Activated CD4-positive, alpha-beta memory T cell treated with anti-CD3 and anti-CD28 coated beads for 36 hours (primary cell): ENCODE measurements at regions of chr2 and their contacts with region 1.

Region 1: GRCh38 chr2:9813312-9814133 is 29.8 kb upstream of the TAF1B start:
- DNase-seq: peak; percentile 80
- H3K4me3 Mint-ChIP-seq: no peak overlapping the region
- H3K27ac Mint-ChIP-seq: no peak overlapping the region
- H3K4me1 Mint-ChIP-seq: peaks cover 14% of the 10 kb centered on the region
- H3K27me3 Mint-ChIP-seq: peaks cover 5% of the 10 kb centered on the region

Region 2: DNA sequence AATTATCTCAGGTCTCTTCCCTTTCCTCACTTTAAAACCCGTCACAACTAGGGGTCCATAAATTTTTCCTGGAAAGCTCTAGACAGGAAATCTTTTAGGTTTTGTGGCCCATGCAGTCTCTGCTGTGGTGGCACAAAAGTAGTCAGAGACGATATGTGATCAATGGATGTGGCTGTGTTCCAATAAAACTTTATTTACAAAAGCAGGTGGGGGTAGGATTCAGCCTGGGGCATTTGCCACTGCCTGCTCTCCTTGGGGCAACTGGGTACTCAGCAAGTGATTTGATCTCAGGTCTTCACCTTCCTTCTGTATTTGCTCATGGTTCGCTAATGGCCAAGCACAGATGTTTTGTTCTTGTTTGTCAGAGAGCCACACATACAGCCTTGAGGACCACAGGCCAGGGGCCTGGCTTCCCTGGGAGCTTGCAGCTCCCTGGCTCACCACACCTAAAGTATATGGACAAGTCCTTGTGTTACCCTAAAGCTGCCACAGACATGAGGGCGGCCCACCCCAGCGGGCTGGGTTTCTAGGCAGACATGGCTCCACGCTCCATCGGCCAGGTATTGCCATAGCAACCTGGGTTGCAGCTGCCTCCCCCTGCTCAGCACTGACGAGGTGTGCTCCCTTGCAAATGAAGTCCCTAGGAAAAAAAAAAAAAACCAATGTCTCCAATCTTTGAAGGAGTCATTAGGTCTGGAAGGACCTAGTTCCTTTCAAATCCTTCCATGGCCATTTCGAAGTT is 93.0 kb before region 1 on chr2:
- CTCF ChIA-PET with region 1: no interaction called
- POLR2A ChIA-PET with region 1: no interaction called
- intact Hi-C with region 1: no loop called
- DNase-seq: no peak
- H3K4me3 Mint-ChIP-seq: no peak overlapping the region
- H3K27ac Mint-ChIP-seq: no peak overlapping the region
- H3K4me1 Mint-ChIP-seq: peaks cover under 1% of the 10 kb centered on the region
- H3K27me3 Mint-ChIP-seq: no peaks in the 10 kb centered on the region

Region 3: DNA sequence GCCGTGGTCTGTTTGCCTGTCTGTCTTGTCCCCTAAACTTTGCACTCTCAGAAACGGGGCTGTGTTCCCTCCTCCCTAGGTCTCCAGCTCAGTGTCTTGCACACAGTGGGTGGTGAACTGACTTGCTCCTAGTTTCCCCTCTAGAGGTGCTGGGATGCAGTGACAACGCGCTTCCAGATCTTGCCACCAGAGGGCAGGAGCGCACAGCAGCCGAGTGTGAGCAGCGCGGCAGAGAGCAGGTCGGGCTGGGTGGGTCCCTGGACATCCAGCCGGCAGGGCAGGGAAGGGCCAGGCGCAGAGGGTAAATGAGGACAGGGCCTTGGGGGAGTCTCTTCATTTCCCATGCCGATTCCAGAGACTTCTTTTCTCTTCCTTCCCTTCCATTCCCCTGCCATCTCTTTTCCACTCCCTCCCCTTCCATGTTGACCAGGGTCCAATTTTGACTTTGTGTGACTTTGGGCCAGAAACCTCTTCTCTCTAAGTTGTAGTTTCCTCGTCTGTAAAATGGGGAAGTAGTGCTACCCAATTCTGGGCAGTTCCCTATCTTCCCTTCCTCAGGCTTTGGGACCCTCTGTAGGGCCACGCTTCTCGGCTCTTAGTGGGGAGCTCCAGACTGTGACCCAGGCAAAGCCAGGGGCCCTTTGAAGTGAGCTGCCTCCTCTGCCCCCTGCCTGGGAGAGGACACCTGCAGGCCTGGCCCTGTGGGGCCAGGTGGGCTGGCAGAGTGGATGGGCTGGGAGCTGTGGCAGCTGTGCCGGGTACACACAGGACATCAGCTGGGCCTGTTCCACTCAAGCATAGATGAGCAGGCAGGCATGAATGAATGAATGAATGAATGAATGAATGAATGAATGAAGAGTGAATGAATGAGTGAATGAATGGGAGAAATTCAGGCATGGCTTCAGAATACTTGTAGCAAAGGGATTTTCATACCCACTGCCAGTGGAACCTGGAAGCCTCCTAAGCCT is 13.6 kb before region 1 on chr2:
- CTCF ChIA-PET with region 1: interaction called, 92 read pairs
- POLR2A ChIA-PET with region 1: interaction called, 3 read pairs
- intact Hi-C with region 1: no loop called
- DNase-seq: peak; percentile 94
- H3K4me3 Mint-ChIP-seq: no peak overlapping the region
- H3K27ac Mint-ChIP-seq: peak overlapping the region; percentile 36
- H3K4me1 Mint-ChIP-seq: peaks cover 35% of the 10 kb centered on the region
- H3K27me3 Mint-ChIP-seq: no peaks in the 10 kb centered on the region

Region 4: GRCh38 chr2:9897331-9897737 is 83.8 kb after region 1 on chr2:
- CTCF ChIA-PET with region 1: interaction called, 14 read pairs
- POLR2A ChIA-PET with region 1: no interaction called
- intact Hi-C with region 1: no loop called
- DNase-seq: peak; percentile 89
- H3K4me3 Mint-ChIP-seq: no peak overlapping the region
- H3K27ac Mint-ChIP-seq: peak overlapping the region; percentile 58
- H3K4me1 Mint-ChIP-seq: peaks cover 25% of the 10 kb centered on the region
- H3K27me3 Mint-ChIP-seq: no peaks in the 10 kb centered on the region

Region 5: GRCh38 chr2:9951272-9951972 is 137.9 kb after region 1 on chr2 and contains the start of gene GRHL1:
- CTCF ChIA-PET with region 1: interaction called, 3 read pairs
- POLR2A ChIA-PET with region 1: no interaction called
- intact Hi-C with region 1: loop called (anchors 5 kb)
- DNase-seq: peak; percentile 93
- H3K4me3 Mint-ChIP-seq: peak within 1 kb of the TSS; percentile 74
- H3K27ac Mint-ChIP-seq: no peak within 1 kb of the TSS
- H3K4me1 Mint-ChIP-seq: peaks cover 5% of the 10 kb centered on the region
- H3K27me3 Mint-ChIP-seq: peaks cover 30% of the 10 kb centered on the region
- total RNA-seq, gene GRHL1: 1.00 to 1.1 TPM

Region 6: GRCh38 chr2:10028988-10029874 is 215.7 kb after region 1 on chr2:
- CTCF ChIA-PET with region 1: interaction called, 14 read pairs
- POLR2A ChIA-PET with region 1: no interaction called
- intact Hi-C with region 1: no loop called
- DNase-seq: peak; percentile 73
- H3K4me3 Mint-ChIP-seq: no peak overlapping the region
- H3K27ac Mint-ChIP-seq: no peak overlapping the region
- H3K4me1 Mint-ChIP-seq: peaks cover 19% of the 10 kb centered on the region
- H3K27me3 Mint-ChIP-seq: no peaks in the 10 kb centered on the region

Region 7: GRCh38 chr2:10097352-10098148 is 284.0 kb after region 1 on chr2:
- CTCF ChIA-PET with region 1: interaction called, 12 read pairs
- POLR2A ChIA-PET with region 1: no interaction called
- intact Hi-C with region 1: no loop called
- DNase-seq: peak; percentile 50
- H3K4me3 Mint-ChIP-seq: no peak overlapping the region
- H3K27ac Mint-ChIP-seq: no peak overlapping the region
- H3K4me1 Mint-ChIP-seq: no peaks in the 10 kb centered on the region
- H3K27me3 Mint-ChIP-seq: peaks cover 21% of the 10 kb centered on the region

Region 8: DNA sequence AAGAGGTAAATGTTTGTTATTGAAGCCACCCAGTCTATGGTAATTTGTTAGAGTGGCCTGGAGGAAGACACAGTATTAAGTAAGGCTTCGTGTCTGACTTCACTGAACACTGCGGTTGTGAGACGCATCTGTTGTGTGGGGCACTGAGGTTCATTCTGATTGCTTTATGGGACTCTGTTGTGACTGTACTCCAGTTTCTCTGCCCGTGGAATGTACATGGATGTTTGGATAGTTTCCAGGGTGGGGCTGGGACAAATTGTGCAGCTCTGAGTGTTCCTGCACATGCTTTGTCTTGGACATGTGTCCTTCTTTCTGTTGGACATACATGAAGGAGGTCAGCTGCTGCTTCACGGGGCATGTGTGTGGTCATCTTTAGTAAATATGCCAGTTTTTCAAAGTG is 576.0 kb after region 1 on chr2:
- CTCF ChIA-PET with region 1: no interaction called
- POLR2A ChIA-PET with region 1: no interaction called
- intact Hi-C with region 1: no loop called
- DNase-seq: no peak
- H3K4me3 Mint-ChIP-seq: no peak overlapping the region
- H3K27ac Mint-ChIP-seq: peak overlapping the region; percentile 34
- H3K4me1 Mint-ChIP-seq: peaks cover 64% of the 10 kb centered on the region
- H3K27me3 Mint-ChIP-seq: no peaks in the 10 kb centered on the region